Sigmoid colon (tissue), 7 donors: ENCODE measurements at regions of chr1 and their contacts with region 1.

Region 1: DNA sequence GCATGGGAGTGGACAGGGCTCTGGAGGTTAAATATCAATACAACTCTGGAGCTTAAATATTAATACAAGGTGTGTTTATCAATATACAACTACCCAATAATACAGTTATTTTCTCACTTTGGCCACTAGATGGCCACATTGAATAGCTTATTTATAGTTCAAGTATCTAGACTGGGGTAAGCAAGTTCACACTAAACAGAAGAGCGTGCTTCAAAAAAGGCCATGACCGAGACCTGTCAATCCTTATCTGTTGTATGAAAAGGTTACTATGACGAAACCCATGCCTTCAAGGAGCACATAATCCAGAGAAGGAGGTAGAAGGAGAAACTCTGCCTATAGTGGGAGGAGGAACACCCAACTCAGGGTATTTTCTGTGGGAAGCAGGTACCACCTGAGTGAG is 29.1 kb downstream of the CHML start:
- DNase-seq: no peak
- H3K4me3 ChIP-seq: no peak overlapping the region
- H3K27ac ChIP-seq: no peak overlapping the region
- H3K4me1 ChIP-seq: peaks cover 0 to 5% (median 0%) of the 10 kb centered on the region in 4 donors
- H3K27me3 ChIP-seq: no peaks in the 10 kb centered on the region
- CTCF ChIP-seq: peak; percentile 38 to 72 (median 63)
- EP300 ChIP-seq: no peak
- POLR2A ChIP-seq: no peak

Region 2: GRCh38 chr1:241317676-241318075 is 293.4 kb before region 1 on chr1:
- intact Hi-C with region 1: no loop called
- DNase-seq: no peak
- H3K4me3 ChIP-seq: no peak overlapping the region
- H3K27ac ChIP-seq: no peak overlapping the region
- H3K4me1 ChIP-seq: no peaks in the 10 kb centered on the region
- H3K27me3 ChIP-seq: no peaks in the 10 kb centered on the region
- CTCF ChIP-seq: no peak
- EP300 ChIP-seq: no peak
- POLR2A ChIP-seq: no peak

Region 3: DNA sequence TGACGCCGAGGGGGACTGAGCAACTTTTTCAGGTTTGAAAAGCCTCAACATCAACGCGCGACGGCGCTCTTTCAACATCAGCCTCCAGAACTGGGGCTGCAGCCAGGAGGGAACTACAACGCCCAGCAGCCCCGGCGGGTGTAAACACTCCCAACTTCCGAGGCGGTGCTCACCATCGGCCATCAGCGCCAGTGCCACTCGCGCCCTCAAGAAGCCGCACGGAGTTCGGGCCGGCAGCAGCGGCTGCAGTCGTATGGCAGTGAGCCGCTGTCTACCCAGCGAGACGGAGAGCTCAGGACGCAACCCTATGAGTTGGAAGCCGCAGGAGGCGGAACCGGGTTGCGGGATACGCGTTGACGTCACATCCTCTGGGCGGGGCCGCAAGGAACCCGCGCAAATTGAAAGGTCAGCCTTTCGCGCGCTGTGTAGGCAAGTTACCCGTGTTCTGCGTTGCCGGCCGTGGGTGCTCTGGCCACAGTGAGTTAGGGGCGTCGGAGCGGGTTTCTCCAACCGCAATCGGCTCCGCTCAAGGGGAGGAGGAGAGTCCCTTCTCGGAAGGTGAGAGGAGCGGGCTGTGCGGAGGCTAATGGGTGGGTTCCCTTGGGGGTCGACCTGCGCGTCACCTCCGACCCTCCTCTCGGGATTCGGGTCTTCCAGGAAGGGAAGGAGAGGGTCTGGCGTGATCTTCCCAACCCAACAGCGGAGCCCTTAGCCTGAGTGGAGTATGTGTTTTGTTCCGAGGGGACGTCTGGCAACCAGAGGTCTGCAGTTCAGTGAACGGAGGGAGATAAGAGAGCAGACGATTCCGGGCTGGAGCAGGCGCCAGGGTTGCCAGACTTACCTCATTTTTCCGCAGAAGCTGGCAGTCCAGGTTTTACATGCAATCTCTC is 237.0 kb after region 1 on chr1 and contains the start of gene EXO1:
- intact Hi-C with region 1: loop called (anchors 5 kb)
- DNase-seq: peak; percentile 92
- H3K4me3 ChIP-seq: peak within 1 kb of the TSS; percentile 72 to 89 (median 78)
- H3K27ac ChIP-seq: peak within 1 kb of the TSS; percentile 95 to 99 (median 96)
- H3K4me1 ChIP-seq: peaks cover 0 to 12% (median 11%) of the 10 kb centered on the region in 4 donors
- H3K27me3 ChIP-seq: no peaks in the 10 kb centered on the region
- CTCF ChIP-seq: no peak
- EP300 ChIP-seq: no peak
- POLR2A ChIP-seq: no peak
- total RNA-seq, gene EXO1: 0.27 to 0.71 TPM in 2 of 4 donors, not detected in the others